Ovary (tissue), 10 donors: ENCODE measurements at regions of chr14 and their contacts with region 1.

Region 1: GRCh38 chr14:22556990-22557623 is 31.9 kb downstream of the DAD1 start:
- DNase-seq: peak; percentile 79 to 88 (median 87)
- H3K4me3 ChIP-seq: peak overlapping the region; percentile 29
- H3K27ac ChIP-seq: no peak overlapping the region
- H3K4me1 ChIP-seq: no peaks in the 10 kb centered on the region
- H3K27me3 ChIP-seq: no peaks in the 10 kb centered on the region
- CTCF ChIP-seq: peak; percentile 94 to 99 (median 97)
- EP300 ChIP-seq: no peak
- POLR2A ChIP-seq: no peak

Region 2: DNA sequence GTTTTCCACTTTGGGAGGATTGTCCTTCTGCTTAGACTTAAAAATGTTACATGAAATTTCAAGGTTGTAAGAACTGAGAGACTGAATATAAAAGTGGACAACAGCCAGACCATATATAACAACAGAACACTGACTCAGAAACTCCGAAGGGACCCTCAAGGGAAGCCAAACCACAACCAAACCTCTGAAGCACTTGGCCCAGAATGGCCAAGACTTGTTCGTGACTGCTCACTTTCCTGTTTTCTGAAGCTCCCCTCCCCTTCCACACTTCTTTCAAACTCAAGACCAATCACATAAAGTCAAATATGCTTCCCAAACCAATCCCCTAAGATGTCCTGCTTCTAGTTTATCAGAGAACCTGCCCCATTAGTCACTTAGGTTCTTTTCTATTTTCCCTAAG is 73.4 kb after region 1 on chr14:
- intact Hi-C with region 1: no loop called
- DNase-seq: no peak
- H3K4me3 ChIP-seq: no peak overlapping the region
- H3K27ac ChIP-seq: no peak overlapping the region
- H3K4me1 ChIP-seq: no peaks in the 10 kb centered on the region
- H3K27me3 ChIP-seq: no peaks in the 10 kb centered on the region
- CTCF ChIP-seq: no peak
- EP300 ChIP-seq: no peak
- POLR2A ChIP-seq: no peak

Region 3: DNA sequence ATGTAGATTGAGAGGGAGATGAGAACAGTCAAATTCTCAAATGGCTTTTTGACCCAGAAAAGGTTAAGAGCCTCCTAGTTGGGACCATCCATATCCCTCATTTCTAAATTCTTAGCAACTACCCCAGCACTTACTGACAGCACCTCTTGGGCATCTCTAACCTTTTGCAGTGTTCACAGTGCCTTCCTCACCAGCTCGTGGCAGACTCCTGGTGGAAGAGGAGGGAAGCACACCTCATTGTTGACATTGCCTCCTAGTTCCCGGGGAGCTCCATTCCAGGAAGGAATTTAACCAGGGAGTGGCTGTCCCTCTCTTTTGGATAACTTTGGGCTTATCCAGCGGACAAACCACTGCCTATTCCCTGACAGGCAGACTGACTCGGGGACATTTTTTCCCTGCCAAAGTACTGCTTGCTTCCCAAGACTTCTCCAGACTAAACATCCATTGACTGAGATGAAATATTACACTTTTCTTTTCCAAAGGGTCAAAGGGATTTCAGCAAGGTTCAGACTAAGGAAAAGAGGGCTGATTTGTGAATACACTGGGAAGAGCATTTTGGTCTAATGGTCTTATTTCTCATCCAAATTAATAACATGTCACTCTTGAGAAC is 96.0 kb after region 1 on chr14:
- intact Hi-C with region 1: loop called in 1 of 4 experiments (anchors 10 kb)
- DNase-seq: peak; percentile 15 to 56 (median 26)
- H3K4me3 ChIP-seq: no peak overlapping the region
- H3K27ac ChIP-seq: no peak overlapping the region
- H3K4me1 ChIP-seq: no peaks in the 10 kb centered on the region
- H3K27me3 ChIP-seq: no peaks in the 10 kb centered on the region
- CTCF ChIP-seq: peak; percentile 18 to 43 (median 22)
- EP300 ChIP-seq: no peak
- POLR2A ChIP-seq: no peak